ENCODE measurements at regions of chr1 and their contacts with region 1.

Region 1: DNA sequence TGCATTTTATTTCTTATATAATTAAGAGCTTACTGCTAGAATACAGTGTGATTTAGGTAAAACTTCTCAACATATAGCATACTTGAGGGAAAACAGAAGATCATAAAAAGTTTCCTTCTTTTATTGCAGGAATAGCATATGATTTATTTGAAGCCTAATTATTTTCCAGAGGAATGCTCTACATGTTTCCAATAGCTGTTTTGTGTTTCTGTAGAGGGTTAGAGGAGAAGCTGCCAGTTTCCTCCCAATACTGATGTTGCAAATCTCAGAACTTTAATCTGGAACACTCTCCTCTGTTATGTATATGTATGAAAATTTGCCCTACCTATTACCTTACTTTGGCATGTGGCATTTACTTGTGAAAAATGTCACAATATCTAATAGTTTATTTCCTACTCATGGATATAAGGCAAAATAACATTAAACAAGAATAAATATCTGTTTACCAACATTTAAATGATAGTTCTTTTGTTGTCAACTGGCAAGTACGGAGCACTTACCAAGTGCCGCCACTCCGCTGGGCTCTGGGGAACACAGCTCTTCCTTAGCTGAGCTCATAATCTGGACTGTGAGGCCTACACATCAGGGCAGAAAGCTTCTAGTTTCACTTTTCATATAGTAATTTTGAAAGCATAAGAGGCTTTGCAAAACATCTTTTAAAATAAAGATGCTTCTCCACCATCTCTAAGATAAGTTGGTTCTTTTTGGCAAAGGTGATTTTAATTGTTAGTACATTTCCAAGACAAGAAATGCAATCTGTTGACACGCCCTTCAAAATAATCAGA is 239.8 kb upstream of the C1orf105 start:
- DNase-seq: no peak
- ATAC-seq: peak; percentile 76
- H3K4me3 Mint-ChIP-seq: peak overlapping the region; percentile 79
- H3K27ac Mint-ChIP-seq: peak overlapping the region; percentile 97
- H3K4me1 Mint-ChIP-seq: peaks cover 53% of the 10 kb centered on the region
- H3K27me3 Mint-ChIP-seq: no peaks in the 10 kb centered on the region
- CTCF ChIP-seq: no peak

Region 2: DNA sequence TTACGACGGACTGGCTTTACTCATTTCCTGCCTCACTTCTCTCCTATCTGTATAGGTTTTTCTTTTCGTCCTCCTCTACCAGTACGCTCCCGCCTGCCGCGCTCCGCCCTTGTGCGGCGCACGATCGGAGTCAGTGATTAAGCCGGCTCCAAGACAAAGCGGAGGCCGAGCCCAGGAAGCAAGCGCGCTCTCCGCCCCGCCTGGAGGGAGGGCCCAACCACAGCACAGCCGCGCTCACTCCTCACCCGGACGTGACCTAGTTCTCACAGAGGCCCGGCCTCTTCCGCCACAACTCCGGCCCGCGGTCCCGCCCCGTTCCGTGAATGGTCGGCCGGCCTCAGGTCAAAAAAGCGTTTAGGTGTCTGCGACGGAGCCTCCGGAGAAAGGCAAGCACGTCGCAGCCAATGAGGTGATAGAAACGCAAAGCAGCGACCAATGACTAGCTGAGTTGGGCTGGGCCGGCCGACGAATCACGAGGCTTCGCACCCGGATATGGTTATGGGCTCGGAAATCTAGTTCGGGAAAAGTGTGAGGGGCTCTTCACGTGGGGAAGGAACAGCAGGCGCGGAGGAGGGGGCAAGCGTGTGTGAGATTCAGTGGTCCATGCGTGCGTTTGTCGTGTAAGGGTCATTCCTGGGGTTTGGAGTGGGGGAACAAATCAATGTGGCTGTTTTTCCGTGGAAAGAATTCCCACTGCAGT is 399.4 kb before region 1 on chr1 and contains the start of gene METTL13:
- CTCF ChIA-PET with region 1: no interaction called
- POLR2A ChIA-PET with region 1: no interaction called
- intact Hi-C with region 1: loop called (anchors 1 kb)
- DNase-seq: peak; percentile 91
- ATAC-seq: peak; percentile 94
- H3K4me3 Mint-ChIP-seq: peak within 1 kb of the TSS; percentile 99
- H3K27ac Mint-ChIP-seq: peak within 1 kb of the TSS; percentile 94
- H3K4me1 Mint-ChIP-seq: peaks cover 43% of the 10 kb centered on the region
- H3K27me3 Mint-ChIP-seq: peaks cover 6% of the 10 kb centered on the region
- CTCF ChIP-seq: no peak
- total RNA-seq, gene METTL13: 33.6 and 35.7 TPM in 2 replicates

Region 3: DNA sequence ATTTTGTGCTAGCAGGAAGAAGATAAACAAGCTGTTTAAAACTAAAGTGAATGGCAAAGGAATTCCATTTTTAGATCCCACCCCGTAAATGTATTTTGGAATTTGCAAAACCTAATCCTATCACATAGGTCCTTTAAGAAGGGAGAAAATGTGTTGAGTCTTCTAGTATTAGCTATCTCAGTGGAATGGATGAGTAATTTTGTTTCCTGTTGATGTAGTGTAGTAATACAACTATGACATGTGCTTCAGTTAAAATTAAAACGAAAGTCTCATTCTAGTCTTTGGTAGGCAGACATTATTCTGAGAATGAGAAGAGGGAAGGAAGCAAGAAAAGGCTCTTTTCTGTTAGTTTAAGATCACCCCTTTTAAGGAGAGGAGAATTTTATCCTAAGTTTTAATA is 26.1 kb before region 1 on chr1:
- CTCF ChIA-PET with region 1: no interaction called
- POLR2A ChIA-PET with region 1: interaction called, 7 read pairs
- intact Hi-C with region 1: loop called (anchors 1 kb)
- DNase-seq: no peak
- ATAC-seq: peak; percentile 83
- H3K4me3 Mint-ChIP-seq: peak overlapping the region; percentile 67
- H3K27ac Mint-ChIP-seq: peak overlapping the region; percentile 89
- H3K4me1 Mint-ChIP-seq: peaks cover 31% of the 10 kb centered on the region
- H3K27me3 Mint-ChIP-seq: no peaks in the 10 kb centered on the region
- CTCF ChIP-seq: no peak

Region 4: GRCh38 chr1:172293429-172293828 is 112.7 kb after region 1 on chr1:
- CTCF ChIA-PET with region 1: no interaction called
- POLR2A ChIA-PET with region 1: no interaction called
- intact Hi-C with region 1: no loop called
- DNase-seq: no peak
- ATAC-seq: no peak
- H3K4me3 Mint-ChIP-seq: no peak overlapping the region
- H3K27ac Mint-ChIP-seq: no peak overlapping the region
- H3K4me1 Mint-ChIP-seq: no peaks in the 10 kb centered on the region
- H3K27me3 Mint-ChIP-seq: no peaks in the 10 kb centered on the region
- CTCF ChIP-seq: no peak

Region 5: DNA sequence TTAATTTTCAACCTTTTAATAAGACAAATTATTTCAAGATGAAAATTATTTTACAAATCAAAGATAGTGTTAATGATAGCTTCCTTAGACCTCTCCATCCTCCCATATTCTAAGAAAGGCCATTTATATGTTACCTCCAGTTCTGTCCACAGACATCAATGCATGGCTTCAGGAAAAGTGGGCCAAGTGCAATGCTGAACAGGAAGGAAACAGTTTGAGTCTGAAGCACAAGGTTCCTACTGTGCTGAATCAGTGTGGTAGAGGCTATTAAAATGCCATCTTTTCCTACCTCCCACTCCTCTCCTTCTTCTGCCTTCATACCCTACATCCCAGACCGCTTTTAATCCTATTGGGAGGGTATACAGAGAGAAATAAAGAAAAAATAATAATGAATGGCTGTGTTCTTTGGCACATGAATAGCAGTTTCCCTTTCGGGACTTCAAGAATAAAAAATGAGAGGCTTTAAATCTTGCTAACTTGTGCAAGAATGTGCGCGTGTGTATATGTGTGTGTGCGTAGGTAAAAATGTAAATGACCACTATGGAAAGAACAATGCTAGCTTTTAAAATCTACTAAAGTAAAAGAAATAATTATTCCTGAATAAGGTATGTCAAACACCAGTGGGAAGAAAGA is 177.2 kb after region 1 on chr1:
- CTCF ChIA-PET with region 1: interaction called, 3 read pairs
- POLR2A ChIA-PET with region 1: interaction called, 10 read pairs
- intact Hi-C with region 1: no loop called
- DNase-seq: no peak
- ATAC-seq: peak; percentile 10
- H3K4me3 Mint-ChIP-seq: peak overlapping the region; percentile 58
- H3K27ac Mint-ChIP-seq: peak overlapping the region; percentile 91
- H3K4me1 Mint-ChIP-seq: peaks cover 53% of the 10 kb centered on the region
- H3K27me3 Mint-ChIP-seq: no peaks in the 10 kb centered on the region
- CTCF ChIP-seq: no peak

Region 6: DNA sequence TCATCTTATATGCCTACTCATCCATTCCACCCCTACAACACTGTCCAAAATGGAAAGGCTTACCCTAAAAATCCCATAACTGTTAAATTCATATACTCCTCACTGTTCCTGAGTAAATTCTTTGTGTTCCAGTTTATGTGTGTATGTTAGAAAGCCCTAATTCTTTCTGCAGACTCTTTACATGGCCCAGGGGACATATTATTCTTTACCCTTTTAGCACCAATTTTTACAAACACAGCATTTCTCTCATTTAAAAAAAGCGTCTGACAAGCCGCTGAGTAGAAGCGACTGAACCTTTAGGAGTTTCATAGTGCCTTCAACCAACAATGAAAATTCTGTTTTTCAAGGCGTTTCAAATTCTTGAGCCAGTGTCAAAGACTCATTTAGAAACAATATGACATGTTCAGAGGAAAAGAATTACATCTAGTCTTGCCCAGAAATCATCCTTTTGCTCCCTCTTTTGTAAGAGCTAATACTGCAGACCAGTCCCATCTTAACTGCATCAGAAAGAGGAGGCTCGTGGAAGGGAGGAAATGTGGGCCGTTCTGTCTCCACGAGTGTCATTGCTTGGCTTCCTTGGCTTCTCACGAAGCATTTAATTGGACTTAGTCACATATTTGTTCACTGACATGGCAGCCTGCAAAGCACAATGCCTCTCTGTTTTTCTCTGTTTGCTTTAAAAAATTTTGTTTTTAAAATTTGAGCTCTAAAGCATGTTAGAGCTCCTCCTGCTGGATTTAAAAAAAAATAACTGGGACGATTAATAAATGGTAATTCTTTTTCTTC is 218.5 kb after region 1 on chr1:
- CTCF ChIA-PET with region 1: interaction called, 16 read pairs
- POLR2A ChIA-PET with region 1: interaction called, 44 read pairs
- intact Hi-C with region 1: loop called (anchors 1 kb)
- DNase-seq: no peak
- ATAC-seq: peak; percentile 50
- H3K4me3 Mint-ChIP-seq: peak overlapping the region; percentile 73
- H3K27ac Mint-ChIP-seq: peak overlapping the region; percentile 90
- H3K4me1 Mint-ChIP-seq: peaks cover 62% of the 10 kb centered on the region
- H3K27me3 Mint-ChIP-seq: no peaks in the 10 kb centered on the region
- CTCF ChIP-seq: no peak

Region 7: GRCh38 chr1:174159252-174160108 is 1978.8 kb after region 1 on chr1 and contains the start of gene RABGAP1L:
- CTCF ChIA-PET with region 1: no interaction called
- POLR2A ChIA-PET with region 1: no interaction called
- intact Hi-C with region 1: loop called (anchors 10 kb)
- DNase-seq: peak; percentile 88
- ATAC-seq: peak; percentile 84
- H3K4me3 Mint-ChIP-seq: peak within 1 kb of the TSS; percentile 96
- H3K27ac Mint-ChIP-seq: peak within 1 kb of the TSS; percentile 99
- H3K4me1 Mint-ChIP-seq: peaks cover 72% of the 10 kb centered on the region
- H3K27me3 Mint-ChIP-seq: no peaks in the 10 kb centered on the region
- CTCF ChIP-seq: no peak
- total RNA-seq, gene RABGAP1L: 103 and 126 TPM in 2 replicates

Measured in activated B cell treated with CpG ODN at 0.5 μM for 24 hours (primary cell).